ENCODE measurements at regions of chr1 and their contacts with region 1.

Region 1: DNA sequence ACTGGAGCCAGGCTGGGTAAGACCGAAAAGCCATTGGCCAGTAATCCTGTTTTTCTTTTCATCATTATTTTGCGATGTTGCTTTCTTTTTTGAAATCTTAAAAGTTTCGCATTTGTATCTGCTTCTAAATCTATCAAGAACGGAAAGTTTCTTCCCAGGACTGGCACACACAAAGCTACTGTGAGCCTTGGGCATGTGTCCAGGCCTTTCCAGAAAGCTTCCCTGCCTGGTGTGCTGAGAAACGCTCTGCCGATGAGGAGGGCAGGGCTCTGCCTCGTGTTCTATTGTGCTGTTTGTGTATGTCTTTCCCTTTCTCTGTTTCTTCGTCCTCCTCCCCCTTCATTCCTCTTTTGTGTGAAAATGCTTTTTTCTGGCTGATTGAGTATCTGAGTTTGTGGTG is 72.4 kb downstream of the RGL1 start:
- DNase-seq: peak; percentile 68
- H3K4me3 ChIP-seq: no peak overlapping the region
- H3K27ac ChIP-seq: peak overlapping the region; percentile 73
- H3K4me1 ChIP-seq: peaks cover 97% of the 10 kb centered on the region
- H3K27me3 ChIP-seq: no peaks in the 10 kb centered on the region
- CTCF ChIP-seq: no peak

Region 2: GRCh38 chr1:183841950-183842794 is 35.1 kb before region 1 on chr1:
- CTCF ChIA-PET with region 1: no interaction called
- POLR2A ChIA-PET with region 1: no interaction called
- intact Hi-C with region 1: loop called (anchors 5 kb)
- DNase-seq: peak; percentile 96
- H3K4me3 ChIP-seq: peak overlapping the region; percentile 29
- H3K27ac ChIP-seq: peak overlapping the region; percentile 97
- H3K4me1 ChIP-seq: peaks cover 67% of the 10 kb centered on the region
- H3K27me3 ChIP-seq: no peaks in the 10 kb centered on the region
- CTCF ChIP-seq: no peak

Region 3: DNA sequence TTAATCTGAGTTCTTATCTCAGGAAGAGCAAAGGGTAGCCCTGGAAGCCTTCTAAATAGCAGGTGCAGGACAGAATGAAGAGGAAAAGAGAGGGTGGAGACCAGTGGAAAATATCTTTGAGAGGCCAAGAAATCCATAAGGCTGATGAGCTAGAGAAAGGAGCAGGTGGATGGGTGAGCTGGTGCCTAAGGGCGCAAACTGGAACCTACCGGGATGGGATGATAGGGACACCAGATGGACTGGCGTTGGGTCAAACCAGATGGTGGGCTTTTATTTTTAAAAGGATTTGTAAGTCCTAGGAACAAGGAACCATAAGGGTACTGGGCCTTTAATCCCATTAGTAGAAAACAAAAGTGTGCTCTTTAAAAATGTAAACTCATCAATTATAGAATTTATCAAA is 12.7 kb before region 1 on chr1:
- CTCF ChIA-PET with region 1: no interaction called
- POLR2A ChIA-PET with region 1: no interaction called
- intact Hi-C with region 1: no loop called
- DNase-seq: no peak
- H3K4me3 ChIP-seq: no peak overlapping the region
- H3K27ac ChIP-seq: no peak overlapping the region
- H3K4me1 ChIP-seq: peaks cover 29% of the 10 kb centered on the region
- H3K27me3 ChIP-seq: no peaks in the 10 kb centered on the region
- CTCF ChIP-seq: no peak

Region 4: DNA sequence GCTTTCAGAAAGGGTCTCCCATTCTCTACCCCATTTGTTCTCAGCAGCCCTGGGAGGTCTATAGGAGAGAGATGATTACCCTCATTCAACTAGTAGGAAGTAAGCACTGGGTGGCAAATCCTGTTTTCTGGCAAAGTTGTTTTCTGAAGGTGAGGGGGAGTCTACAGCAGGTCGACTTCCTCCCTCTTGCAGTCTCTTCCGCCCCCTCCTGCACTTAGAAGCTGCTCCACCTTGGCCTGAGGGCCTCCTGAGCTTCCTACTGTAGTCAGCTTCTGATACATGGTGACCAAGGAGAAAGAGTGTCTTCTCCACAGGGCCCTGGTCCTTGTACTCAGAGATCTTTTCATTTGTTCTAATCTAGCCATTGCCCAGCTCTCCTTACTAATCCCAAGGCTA is 20.7 kb after region 1 on chr1:
- CTCF ChIA-PET with region 1: no interaction called
- POLR2A ChIA-PET with region 1: no interaction called
- intact Hi-C with region 1: no loop called
- DNase-seq: no peak
- H3K4me3 ChIP-seq: no peak overlapping the region
- H3K27ac ChIP-seq: peak overlapping the region; percentile 44
- H3K4me1 ChIP-seq: peaks cover 15% of the 10 kb centered on the region
- H3K27me3 ChIP-seq: no peaks in the 10 kb centered on the region
- CTCF ChIP-seq: no peak

Region 5: GRCh38 chr1:184296466-184297243 is 419.3 kb after region 1 on chr1:
- CTCF ChIA-PET with region 1: no interaction called
- POLR2A ChIA-PET with region 1: no interaction called
- intact Hi-C with region 1: no loop called
- DNase-seq: peak; percentile 98
- H3K4me3 ChIP-seq: peak overlapping the region; percentile 6
- H3K27ac ChIP-seq: peak overlapping the region; percentile 85
- H3K4me1 ChIP-seq: peaks cover 47% of the 10 kb centered on the region
- H3K27me3 ChIP-seq: no peaks in the 10 kb centered on the region
- CTCF ChIP-seq: no peak